Calu3 (cell line): ENCODE measurements at regions of chr6 and their contacts with region 1.

Region 1: GRCh38 chr6:27672113-27672799 is 199.4 kb upstream of the ZNF184 start:
- DNase-seq: peak; percentile 85
- H3K4me3 Mint-ChIP-seq: peak overlapping the region; percentile 60
- H3K27ac Mint-ChIP-seq: peak overlapping the region; percentile 78
- H3K4me1 Mint-ChIP-seq: peaks cover 36% of the 10 kb centered on the region
- H3K27me3 Mint-ChIP-seq: no peaks in the 10 kb centered on the region
- CTCF ChIP-seq: no peak

Region 2: DNA sequence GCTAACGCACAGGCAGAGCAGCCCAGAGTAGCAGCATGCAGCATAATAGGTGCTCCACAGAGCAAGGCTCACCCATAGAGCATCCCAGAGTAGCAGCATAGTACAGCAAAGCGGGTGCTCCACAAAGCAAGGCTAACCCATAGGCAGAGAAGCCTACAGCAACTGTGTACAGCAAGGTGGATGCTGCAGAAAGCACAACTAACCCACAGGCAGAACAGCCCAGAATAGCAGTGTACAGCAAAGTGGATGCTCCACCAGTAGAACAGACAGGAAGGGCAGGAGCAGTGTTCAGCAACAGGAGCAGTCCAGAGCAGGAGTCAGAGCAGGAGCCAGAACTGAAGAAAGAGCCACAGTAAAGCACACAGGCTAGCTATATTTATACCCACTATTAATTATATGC is 557.5 kb before region 1 on chr6:
- CTCF ChIA-PET with region 1: no interaction called
- intact Hi-C with region 1: no loop called
- DNase-seq: no peak
- H3K4me3 Mint-ChIP-seq: no peak overlapping the region
- H3K27ac Mint-ChIP-seq: no peak overlapping the region
- H3K4me1 Mint-ChIP-seq: no peaks in the 10 kb centered on the region
- H3K27me3 Mint-ChIP-seq: no peaks in the 10 kb centered on the region
- CTCF ChIP-seq: no peak

Region 3: GRCh38 chr6:27545271-27546046 is 126.8 kb before region 1 on chr6:
- CTCF ChIA-PET with region 1: interaction called, 5 read pairs
- intact Hi-C with region 1: loop called (anchors 5 kb)
- DNase-seq: peak; percentile 91
- H3K4me3 Mint-ChIP-seq: peak overlapping the region; percentile 76
- H3K27ac Mint-ChIP-seq: peak overlapping the region; percentile 91
- H3K4me1 Mint-ChIP-seq: peaks cover 29% of the 10 kb centered on the region
- H3K27me3 Mint-ChIP-seq: no peaks in the 10 kb centered on the region
- CTCF ChIP-seq: no peak

Region 4: GRCh38 chr6:27592481-27593199 is 79.6 kb before region 1 on chr6:
- CTCF ChIA-PET with region 1: no interaction called
- intact Hi-C with region 1: loop called (anchors 5 kb)
- DNase-seq: peak; percentile 80
- H3K4me3 Mint-ChIP-seq: no peak overlapping the region
- H3K27ac Mint-ChIP-seq: no peak overlapping the region
- H3K4me1 Mint-ChIP-seq: no peaks in the 10 kb centered on the region
- H3K27me3 Mint-ChIP-seq: no peaks in the 10 kb centered on the region
- CTCF ChIP-seq: no peak

Region 5: DNA sequence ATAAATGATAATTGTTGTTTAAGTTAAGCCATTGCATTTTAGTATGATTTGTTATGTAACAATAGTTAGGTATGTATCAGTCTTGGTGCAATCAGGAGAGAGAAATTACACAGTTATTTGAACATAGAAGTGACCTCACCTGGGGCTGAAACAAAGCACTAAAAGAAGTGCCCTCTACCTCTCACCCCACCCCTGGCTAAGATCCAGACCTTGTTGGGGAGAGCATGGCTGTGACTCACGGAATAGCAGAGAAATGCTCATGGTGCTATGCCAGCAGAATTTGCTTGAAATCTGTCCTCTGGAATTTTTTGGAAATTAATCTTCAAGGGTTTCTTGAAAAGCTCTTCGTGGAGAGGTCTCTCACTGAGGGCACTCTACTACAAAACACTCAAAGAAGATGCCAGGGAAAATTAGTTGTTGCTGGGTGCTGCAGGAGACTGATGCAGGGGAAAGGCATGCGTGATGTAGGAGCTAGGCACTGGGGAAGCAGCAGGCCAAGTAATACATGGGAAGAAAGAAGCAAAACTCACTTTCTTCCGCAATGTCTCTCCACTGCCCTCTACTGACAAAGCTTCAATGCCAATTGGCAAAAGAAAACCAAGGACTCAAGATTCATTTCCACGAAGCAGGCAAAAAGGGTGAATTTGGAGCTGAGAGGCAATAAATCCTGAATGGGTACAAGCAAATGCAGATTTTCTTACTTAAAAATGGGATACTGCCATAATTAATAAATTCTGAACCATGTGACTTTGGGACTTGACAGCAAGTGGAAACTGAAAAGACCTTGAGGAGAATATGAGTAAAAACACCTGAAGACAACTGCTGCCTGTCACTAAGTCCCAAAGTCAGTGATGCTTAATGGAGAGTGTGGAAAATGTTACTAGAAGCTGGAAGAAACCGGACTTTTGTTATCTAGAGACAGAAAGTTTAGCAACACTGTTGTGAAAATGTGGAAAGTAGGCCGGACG is 63.1 kb before region 1 on chr6:
- CTCF ChIA-PET with region 1: interaction called, 3 read pairs
- intact Hi-C with region 1: loop called (anchors 5 kb)
- DNase-seq: peak; percentile 78
- H3K4me3 Mint-ChIP-seq: no peak overlapping the region
- H3K27ac Mint-ChIP-seq: peak overlapping the region; percentile 57
- H3K4me1 Mint-ChIP-seq: peaks cover 28% of the 10 kb centered on the region
- H3K27me3 Mint-ChIP-seq: no peaks in the 10 kb centered on the region
- CTCF ChIP-seq: peak; percentile 83

Region 6: DNA sequence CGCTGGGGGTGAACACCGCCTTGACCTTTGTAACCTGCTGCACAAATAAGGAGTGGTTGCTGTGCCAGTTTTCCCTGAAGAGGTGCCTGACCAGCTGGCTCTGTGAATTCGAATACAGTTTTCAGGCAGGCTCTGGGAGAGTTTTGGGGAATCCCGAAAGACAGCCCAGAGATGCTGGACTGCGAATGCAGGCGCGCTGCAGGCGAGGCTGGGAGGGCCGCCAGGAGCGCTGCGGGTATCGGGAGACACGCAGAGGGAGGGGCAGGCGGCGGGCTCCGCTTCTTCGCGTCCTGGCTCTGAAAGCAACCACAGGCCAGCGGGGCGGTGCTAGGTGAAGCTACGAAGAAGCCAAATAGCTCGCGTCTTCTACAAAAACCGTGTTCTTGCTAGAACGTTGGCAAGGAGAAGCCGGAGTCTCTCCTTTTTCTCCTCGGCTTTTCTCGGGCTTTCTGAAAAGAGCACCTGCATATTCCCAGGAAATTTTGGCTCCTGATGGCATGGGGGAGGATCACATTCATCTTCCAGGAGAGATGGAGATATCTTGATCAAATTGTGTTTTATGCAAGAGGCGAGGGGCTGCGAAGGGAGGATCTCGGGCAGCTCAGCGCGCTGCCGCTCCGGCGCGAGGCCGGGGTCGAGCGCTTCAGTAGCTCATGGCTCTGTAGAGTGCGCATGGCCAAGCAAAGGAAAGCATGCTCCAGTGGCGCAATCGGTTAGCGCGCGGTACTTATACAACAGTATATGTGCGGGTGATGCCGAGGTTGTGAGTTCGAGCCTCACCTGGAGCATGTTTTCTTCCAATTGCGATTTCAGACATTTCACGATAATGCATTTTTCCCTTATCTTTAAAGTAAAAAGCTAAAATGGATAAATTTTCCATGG is 41.3 kb before region 1 on chr6:
- CTCF ChIA-PET with region 1: interaction called, 3 read pairs
- intact Hi-C with region 1: loop called (anchors 5 kb)
- DNase-seq: peak; percentile 84
- H3K4me3 Mint-ChIP-seq: peak overlapping the region; percentile 83
- H3K27ac Mint-ChIP-seq: peak overlapping the region; percentile 92
- H3K4me1 Mint-ChIP-seq: peaks cover 47% of the 10 kb centered on the region
- H3K27me3 Mint-ChIP-seq: no peaks in the 10 kb centered on the region
- CTCF ChIP-seq: no peak

Region 7: DNA sequence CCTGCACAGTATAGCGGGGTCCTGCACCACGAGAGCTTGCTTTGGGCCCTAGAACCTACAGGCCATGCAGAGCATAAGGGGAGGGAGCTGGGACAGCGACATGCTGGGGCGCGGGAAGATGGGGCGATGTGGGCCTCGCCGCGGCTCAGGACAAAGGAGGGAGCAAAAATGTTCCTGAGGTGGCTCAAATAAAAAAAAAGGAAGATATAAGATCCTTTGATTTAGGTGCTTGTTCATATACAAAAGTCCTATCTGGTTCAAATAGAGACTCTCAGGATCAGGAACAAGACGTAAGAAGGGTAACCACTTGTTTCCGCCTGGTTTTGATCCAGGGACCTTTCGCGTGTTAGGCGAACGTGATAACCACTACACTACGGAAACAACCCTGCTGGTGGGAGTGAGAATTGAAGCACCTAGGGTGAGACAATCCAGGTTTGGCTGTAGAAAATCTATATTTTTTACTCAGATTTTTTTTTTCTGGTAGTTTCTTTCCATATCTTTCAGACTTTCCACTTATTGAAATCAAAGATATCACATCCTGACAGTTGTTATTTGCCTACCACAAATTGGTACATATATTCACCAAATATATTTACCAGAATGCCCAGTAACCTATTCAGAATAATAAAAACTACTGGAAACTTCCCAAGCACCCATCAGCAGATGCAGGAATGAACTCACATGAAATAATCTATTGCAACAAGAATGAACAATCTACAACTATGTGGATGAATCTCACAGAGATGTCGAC is 21.5 kb before region 1 on chr6:
- CTCF ChIA-PET with region 1: no interaction called
- intact Hi-C with region 1: no loop called
- DNase-seq: peak; percentile 83
- H3K4me3 Mint-ChIP-seq: peak overlapping the region; percentile 57
- H3K27ac Mint-ChIP-seq: peak overlapping the region; percentile 91
- H3K4me1 Mint-ChIP-seq: peaks cover 10% of the 10 kb centered on the region
- H3K27me3 Mint-ChIP-seq: no peaks in the 10 kb centered on the region
- CTCF ChIP-seq: no peak

Region 8: DNA sequence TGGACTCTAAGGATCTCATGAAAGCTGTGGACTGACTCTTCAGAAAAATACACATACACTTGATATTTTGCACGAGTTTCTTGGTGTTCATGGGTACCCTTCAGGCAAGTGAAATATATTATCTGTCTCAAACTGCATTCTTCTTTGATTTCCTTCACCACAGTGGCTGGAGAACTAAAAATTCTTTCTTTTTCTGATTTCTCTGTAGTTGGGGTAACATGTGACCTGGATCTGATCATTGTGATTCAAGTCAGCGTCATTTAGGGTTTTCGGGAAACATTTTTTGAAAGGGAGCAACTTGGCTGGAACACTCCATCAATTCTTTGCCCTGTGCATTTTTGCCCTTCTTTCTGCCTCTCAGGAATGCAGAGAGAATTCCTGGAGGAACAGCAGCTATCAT is 34.2 kb after region 1 on chr6:
- CTCF ChIA-PET with region 1: no interaction called
- intact Hi-C with region 1: no loop called
- DNase-seq: no peak
- H3K4me3 Mint-ChIP-seq: no peak overlapping the region
- H3K27ac Mint-ChIP-seq: no peak overlapping the region
- H3K4me1 Mint-ChIP-seq: no peaks in the 10 kb centered on the region
- H3K27me3 Mint-ChIP-seq: no peaks in the 10 kb centered on the region
- CTCF ChIP-seq: no peak